Mammary epithelial cell (primary cell): ENCODE measurements at regions of chr1 and their contacts with region 1.

Region 1: DNA sequence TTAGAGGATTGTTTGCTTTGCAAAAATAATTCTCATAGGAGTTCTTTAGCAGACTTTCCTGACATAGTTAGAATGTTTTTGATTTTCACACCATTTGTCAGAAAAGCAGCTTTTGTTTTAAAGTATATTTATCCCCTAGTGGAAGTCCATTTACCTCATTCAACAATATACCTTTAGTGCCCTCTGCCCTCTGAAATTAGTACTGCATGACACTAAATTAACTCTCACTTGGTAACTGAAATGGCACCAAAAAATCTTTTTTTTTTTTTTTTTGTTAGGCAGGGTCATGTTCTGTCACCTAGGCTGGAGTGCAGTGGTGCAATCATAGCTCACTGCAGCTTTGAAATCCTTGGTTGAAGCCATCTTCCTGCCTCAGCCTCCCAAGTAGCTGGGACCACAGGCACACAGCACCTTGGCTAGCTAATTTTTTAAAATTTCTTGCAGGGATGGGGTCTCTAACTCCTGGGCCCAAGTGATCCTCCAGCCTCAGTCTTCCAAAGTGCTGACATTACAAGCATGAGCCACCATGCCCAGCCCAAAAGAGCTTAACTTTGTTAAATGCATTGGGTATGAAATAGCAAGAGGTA is 13.6 kb downstream of the LRRC42 start:
- DNase-seq: peak; percentile 17
- H3K4me3 ChIP-seq: no peak overlapping the region
- H3K27ac ChIP-seq: no peak overlapping the region
- H3K4me1 ChIP-seq: peaks cover 27% of the 10 kb centered on the region
- H3K27me3 ChIP-seq: no peaks in the 10 kb centered on the region
- CTCF ChIP-seq: peak; percentile 50 to 65

Region 2: GRCh38 chr1:53485478-53486394 is 474.0 kb before region 1 on chr1:
- CTCF ChIA-PET with region 1: no interaction called
- dilution Hi-C with region 1: no loop called
- in situ Hi-C with region 1: no loop called
- intact Hi-C with region 1: loop called (anchors 10 kb)
- DNase-seq: peak; percentile 35
- H3K4me3 ChIP-seq: no peak overlapping the region
- H3K27ac ChIP-seq: no peak overlapping the region
- H3K4me1 ChIP-seq: no peaks in the 10 kb centered on the region
- H3K27me3 ChIP-seq: no peaks in the 10 kb centered on the region
- CTCF ChIP-seq: peak; percentile 74 to 95

Region 3: DNA sequence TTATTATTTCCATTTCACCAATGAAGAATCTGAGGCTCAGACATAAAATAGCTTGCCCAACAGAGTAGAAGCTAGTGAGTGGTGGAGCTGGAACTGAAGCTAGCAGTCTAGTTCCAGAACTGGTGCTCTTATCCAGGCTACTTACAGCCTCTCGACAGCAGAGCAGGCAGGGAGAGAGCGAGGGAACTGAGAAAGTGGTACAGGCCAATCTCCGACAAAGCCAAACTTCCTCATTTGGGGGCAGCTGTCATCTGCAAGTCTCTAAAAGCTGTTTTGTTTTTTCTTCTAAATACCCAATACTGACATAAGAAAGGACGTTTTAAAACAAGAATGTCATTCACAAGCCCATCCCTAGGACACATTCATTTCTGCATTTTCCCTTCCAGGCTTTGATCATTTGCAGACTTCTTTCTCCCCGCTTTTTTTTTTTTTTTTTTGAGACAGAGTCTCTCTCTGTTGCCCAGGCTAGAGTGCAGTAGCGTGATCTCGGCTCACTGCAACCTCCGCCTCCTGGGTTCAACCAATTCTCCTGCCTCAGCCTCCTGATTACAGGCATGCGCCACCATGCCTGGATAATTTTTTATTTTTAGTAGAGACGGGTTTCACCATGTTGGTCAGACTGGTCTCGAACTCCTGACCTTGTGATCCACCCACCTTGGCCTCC is 90.2 kb before region 1 on chr1:
- CTCF ChIA-PET with region 1: interaction called, 3 read pairs
- dilution Hi-C with region 1: no loop called
- in situ Hi-C with region 1: loop called in 1 of 2 experiments (anchors 5 kb)
- intact Hi-C with region 1: no loop called
- DNase-seq: no peak
- H3K4me3 ChIP-seq: no peak overlapping the region
- H3K27ac ChIP-seq: no peak overlapping the region
- H3K4me1 ChIP-seq: no peaks in the 10 kb centered on the region
- H3K27me3 ChIP-seq: no peaks in the 10 kb centered on the region
- CTCF ChIP-seq: no peak

Region 4: DNA sequence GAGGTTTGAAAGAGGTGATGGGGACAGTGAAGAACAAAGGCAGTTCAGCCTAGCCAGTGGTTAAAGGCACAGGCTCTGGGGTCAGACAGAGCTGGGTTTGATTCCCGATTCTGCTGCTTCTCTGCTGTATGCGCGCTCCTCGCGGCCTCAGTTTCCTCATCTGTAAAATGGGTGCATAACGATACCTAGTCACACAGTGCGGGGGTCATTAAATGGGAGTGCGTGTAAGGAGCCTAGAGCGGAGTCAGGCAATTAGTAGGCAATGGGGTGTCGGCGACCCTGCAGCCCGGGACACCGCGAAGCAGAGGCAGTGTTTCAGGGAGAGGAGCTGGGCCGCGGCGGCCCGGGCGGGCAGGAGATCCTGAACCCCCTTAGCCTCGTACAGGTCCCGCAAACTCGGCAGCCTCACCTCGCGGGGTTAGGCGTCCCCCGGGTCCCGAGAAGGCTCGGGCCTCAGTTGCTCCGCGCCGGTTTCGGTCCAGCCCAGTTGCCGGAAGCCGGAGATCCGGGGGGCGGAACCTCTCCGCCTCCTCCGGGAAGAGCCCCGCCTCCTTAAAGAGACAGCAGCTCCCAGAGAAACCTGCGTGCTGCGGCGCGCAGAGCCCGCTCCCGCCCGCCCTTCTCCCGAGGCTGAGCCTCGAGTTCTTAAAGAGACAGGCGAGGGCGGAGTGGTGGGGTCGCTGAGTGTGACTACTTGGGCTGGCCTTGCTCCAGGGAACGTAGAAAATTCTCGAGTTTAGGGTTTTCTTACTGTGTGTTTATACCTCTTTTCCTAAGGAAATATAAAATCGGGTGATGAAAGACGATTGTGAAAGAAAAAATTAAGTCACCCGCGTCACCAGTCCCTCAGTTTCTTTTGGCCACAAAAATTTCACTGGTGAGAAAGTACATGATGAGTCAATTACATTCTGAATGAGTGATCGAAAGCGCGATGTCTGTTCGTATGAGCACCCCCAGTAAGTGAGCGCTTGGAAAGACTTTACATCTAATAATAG is 70.2 kb before region 1 on chr1 and contains the start of gene YIPF1:
- CTCF ChIA-PET with region 1: interaction called, 4 read pairs
- dilution Hi-C with region 1: no loop called
- in situ Hi-C with region 1: loop called in 1 of 2 experiments (anchors 10 kb)
- intact Hi-C with region 1: no loop called
- DNase-seq: peak; percentile 91
- H3K4me3 ChIP-seq: peak within 1 kb of the TSS; percentile 78 to 90 (median 79)
- H3K27ac ChIP-seq: peak within 1 kb of the TSS; percentile 90
- H3K4me1 ChIP-seq: peaks cover 15% of the 10 kb centered on the region
- H3K27me3 ChIP-seq: no peaks in the 10 kb centered on the region
- CTCF ChIP-seq: no peak
- total RNA-seq, gene YIPF1: 21.6 to 24.8 TPM

Region 5: DNA sequence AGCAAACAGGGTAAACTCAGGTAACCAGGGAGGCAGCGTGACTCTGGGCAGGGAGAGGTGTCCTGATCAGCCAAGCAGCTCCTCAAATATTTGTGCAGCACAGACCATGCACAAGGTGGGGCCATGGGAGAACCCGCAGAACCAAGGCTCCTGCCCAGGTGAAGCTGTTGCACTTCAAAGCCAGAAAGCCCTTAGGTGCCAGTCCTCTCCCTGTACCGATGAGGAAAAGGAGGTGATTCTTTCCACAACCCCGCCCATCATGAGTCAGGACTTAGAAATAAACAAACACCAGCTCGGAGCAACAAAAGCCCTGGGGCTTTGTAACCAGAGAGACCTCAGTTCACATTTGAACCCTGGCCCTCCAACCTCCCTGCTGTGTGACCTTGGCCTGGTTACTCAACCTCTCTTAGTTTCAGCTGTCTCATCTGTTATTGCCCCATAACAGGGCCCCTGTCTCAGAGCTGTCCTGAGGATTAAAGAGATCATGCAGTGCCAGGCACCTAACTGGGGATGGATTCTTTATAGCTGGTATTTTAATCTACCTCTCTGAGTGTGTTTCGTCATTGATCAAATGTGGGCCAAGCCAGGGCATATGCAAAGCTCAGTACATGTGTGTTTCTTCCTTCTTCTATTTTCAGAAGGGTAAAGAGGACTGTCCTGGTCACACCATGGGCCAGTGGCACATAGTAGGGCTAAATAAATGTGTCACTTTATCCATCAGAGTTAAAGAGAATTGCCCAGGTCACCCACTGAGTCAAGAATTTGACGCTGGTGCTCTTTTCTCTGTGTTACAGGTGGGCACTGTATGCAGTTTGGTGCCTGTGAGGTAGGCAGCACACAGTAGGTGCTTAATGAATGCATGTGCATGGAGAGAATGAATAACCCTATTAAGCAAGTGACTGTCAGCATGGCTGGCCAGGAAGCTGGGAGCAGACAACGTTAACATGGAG is 56.8 kb after region 1 on chr1:
- CTCF ChIA-PET with region 1: interaction called, 11 read pairs
- dilution Hi-C with region 1: no loop called
- in situ Hi-C with region 1: no loop called
- intact Hi-C with region 1: no loop called
- DNase-seq: peak; percentile 80
- H3K4me3 ChIP-seq: no peak overlapping the region
- H3K27ac ChIP-seq: no peak overlapping the region
- H3K4me1 ChIP-seq: peaks cover 12% of the 10 kb centered on the region
- H3K27me3 ChIP-seq: no peaks in the 10 kb centered on the region
- CTCF ChIP-seq: no peak

Region 6: DNA sequence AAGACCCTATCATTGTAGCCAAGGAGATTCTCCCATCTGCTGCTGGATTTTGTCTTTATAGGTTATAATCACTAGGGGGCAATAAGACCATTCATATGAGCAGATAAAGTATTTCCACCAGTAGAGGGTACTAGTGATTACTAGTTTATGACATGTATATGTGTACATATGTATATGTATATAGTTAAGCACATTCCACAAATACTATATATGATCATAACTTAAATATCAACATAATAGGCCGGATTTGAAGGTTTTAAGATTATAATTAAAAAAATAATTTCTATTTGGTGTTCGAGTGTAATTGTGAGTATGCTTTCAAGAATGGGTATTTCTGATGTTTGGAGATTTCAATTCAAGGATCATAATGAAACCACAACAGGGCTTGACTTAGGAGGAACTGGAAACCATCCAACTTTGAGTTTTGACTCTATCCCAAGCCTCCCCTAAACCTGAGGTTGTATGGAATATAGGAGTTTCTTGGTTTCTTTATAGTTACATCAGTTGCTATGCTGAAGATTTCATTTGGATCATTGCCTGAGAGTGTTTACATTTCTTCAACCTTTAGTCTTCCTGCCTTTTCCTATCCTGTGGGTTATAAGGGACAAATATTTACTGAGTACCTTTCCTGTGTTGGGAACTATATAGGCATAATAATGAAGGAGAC is 110.5 kb after region 1 on chr1:
- CTCF ChIA-PET with region 1: no interaction called
- dilution Hi-C with region 1: no loop called
- in situ Hi-C with region 1: no loop called
- intact Hi-C with region 1: no loop called
- DNase-seq: peak; percentile 28
- H3K4me3 ChIP-seq: no peak overlapping the region
- H3K27ac ChIP-seq: no peak overlapping the region
- H3K4me1 ChIP-seq: no peaks in the 10 kb centered on the region
- H3K27me3 ChIP-seq: no peaks in the 10 kb centered on the region
- CTCF ChIP-seq: peak; percentile 76 to 79

Region 7: DNA sequence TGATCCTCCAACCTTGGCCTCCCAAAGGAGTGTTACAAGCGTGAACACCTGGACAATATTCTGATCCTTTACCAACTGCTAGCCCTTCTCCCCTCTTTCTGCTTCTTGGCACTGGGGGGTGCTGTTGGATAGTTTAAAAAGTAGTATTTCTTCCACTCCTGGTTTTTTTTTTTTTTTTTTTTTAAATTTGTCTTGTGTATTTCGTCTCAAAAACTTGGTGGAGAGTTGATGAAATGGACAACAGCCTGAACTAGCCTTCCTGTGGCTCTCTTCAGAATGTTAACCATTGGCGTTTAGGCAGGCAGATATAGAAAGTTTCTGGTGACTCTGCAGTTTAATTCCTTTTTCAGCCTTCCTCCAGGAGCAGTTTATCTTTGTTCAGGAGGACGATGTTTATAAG is 1325.1 kb after region 1 on chr1:
- CTCF ChIA-PET with region 1: no interaction called
- dilution Hi-C with region 1: no loop called
- in situ Hi-C with region 1: no loop called
- intact Hi-C with region 1: no loop called
- DNase-seq: peak; percentile 28
- H3K4me3 ChIP-seq: no peak overlapping the region
- H3K27ac ChIP-seq: no peak overlapping the region
- H3K4me1 ChIP-seq: peaks cover 11% of the 10 kb centered on the region
- H3K27me3 ChIP-seq: no peaks in the 10 kb centered on the region
- CTCF ChIP-seq: peak; percentile 57 to 62